Mammary epithelial cell (primary cell): ENCODE measurements at regions of chr9 and their contacts with region 1.

Region 1: DNA sequence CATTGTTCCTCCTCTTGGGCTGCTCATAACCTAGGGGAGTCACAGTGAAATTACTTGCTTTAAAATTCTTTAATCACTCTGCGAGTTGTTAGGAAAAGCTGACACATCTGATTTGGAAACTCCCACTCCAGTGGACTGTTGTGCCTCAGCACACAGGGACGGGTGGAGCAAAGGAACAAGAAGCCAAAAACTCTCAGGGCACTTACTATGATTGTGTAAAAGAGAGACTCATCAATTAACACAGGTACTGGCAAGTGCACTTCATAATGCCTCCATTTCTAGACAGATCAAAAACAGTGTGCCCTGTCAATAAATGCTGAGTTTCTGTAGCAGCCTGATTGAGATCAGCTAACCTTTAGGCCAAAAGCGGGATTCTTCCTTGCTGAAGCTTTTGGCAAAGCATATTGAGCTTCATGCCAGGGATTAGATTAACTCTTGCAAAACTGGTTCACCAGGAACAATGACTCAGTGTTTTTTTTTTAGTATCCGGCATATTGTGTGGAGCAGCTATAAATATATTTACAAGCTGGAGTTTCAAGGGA is 55.9 kb downstream of the TMC1 start:
- DNase-seq: peak; percentile 93
- H3K4me3 ChIP-seq: peak overlapping the region in 1 of 3 experiments; percentile 6
- H3K27ac ChIP-seq: peak overlapping the region; percentile 66
- H3K4me1 ChIP-seq: peaks cover 52% of the 10 kb centered on the region
- H3K27me3 ChIP-seq: no peaks in the 10 kb centered on the region
- CTCF ChIP-seq: no peak

Region 2: GRCh38 chr9:72480921-72481320 is 96.4 kb before region 1 on chr9:
- CTCF ChIA-PET with region 1: interaction called, 6 read pairs
- dilution Hi-C with region 1: loop called (anchors 5 kb)
- in situ Hi-C with region 1: no loop called
- intact Hi-C with region 1: no loop called
- DNase-seq: no peak
- H3K4me3 ChIP-seq: no peak overlapping the region
- H3K27ac ChIP-seq: no peak overlapping the region
- H3K4me1 ChIP-seq: peaks cover 32% of the 10 kb centered on the region
- H3K27me3 ChIP-seq: no peaks in the 10 kb centered on the region
- CTCF ChIP-seq: no peak

Region 3: GRCh38 chr9:72540348-72540873 is 36.9 kb before region 1 on chr9:
- CTCF ChIA-PET with region 1: no interaction called
- dilution Hi-C with region 1: loop called (anchors 10 kb)
- in situ Hi-C with region 1: no loop called
- intact Hi-C with region 1: loop called (anchors 1 kb)
- DNase-seq: peak; percentile 96
- H3K4me3 ChIP-seq: no peak overlapping the region
- H3K27ac ChIP-seq: peak overlapping the region; percentile 95
- H3K4me1 ChIP-seq: peaks cover 34% of the 10 kb centered on the region
- H3K27me3 ChIP-seq: no peaks in the 10 kb centered on the region
- CTCF ChIP-seq: no peak

Region 4: GRCh38 chr9:72635197-72635596 is 57.9 kb after region 1 on chr9:
- CTCF ChIA-PET with region 1: no interaction called
- dilution Hi-C with region 1: no loop called
- in situ Hi-C with region 1: no loop called
- intact Hi-C with region 1: no loop called
- DNase-seq: no peak
- H3K4me3 ChIP-seq: no peak overlapping the region
- H3K27ac ChIP-seq: no peak overlapping the region
- H3K4me1 ChIP-seq: peaks cover 7% of the 10 kb centered on the region
- H3K27me3 ChIP-seq: no peaks in the 10 kb centered on the region
- CTCF ChIP-seq: no peak